ENCODE measurements at regions of chr6 and their contacts with region 1.

Region 1: DNA sequence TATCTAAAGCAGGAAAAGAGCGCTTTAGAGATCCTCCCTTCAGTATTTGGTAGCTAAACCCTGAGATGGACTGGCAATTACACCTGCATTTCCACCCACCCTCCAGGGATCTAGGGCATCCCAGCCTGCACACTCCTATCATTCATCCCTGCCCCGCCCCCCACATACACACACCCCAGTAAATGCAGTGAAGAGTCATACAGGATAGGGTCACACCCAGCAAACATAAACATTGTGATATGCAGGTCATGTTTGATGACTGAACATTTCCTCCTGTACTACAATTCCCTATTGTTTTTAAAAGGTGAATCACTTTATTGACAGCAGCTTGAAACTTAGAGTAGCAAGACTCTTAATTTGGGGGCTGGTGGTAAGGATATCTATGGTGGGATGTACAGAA is 112.9 kb downstream of the FOXO3 start:
- DNase-seq: peak; percentile 65 to 74
- ATAC-seq: peak; percentile 88

Region 2: GRCh38 chr6:108560463-108561308 is 112.9 kb before region 1 on chr6 and contains the start of gene FOXO3:
- intact Hi-C with region 1: loop called in 1 of 2 experiments (anchors 10 kb)
- DNase-seq: peak; percentile 94
- ATAC-seq: peak; percentile 58
- total RNA-seq, gene FOXO3: 39.9 to 70.0 TPM

Region 3: GRCh38 chr6:109036574-109037294 is 363.1 kb after region 1 on chr6:
- intact Hi-C with region 1: no loop called
- DNase-seq: no peak
- ATAC-seq: no peak

Measured in left colon (tissue), 2 donors.